ENCODE measurements at regions of chr12 and their contacts with region 1.

Region 1: DNA sequence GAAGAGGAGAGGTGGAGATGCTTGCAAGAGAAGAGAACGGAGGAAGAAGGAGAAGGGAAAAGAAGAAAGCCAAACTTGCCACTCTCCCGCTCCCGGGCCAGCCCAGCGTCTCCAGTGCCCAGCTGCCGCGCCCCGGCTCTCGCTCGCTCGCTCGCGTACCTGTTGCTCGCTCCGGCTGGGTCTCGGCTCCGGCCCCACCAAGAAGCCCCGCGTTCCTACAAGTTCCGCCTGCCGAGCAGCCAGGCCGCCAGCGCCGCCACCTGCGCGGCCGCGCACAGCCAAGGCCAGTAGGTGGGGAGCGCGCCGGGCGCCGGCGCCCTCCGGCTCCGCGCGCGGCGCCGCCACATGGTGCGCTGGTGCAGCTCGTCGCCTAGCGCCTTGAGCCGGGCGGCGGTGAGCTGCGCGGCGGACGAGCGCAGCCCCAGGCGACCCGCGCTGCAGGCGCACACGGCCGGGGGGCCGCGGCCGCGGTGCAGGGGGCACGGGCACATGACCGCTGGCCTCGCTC is 370 bp downstream of the HRK start:
- H3K4me3 ChIP-seq: peak overlapping the region; percentile 49
- H3K27ac ChIP-seq: peak overlapping the region; percentile 84; the same call in 1 of the 2 replicates
- H3K4me1 ChIP-seq: peaks cover 10% of the 10 kb centered on the region
- CTCF ChIP-seq: no peak

Region 2: DNA sequence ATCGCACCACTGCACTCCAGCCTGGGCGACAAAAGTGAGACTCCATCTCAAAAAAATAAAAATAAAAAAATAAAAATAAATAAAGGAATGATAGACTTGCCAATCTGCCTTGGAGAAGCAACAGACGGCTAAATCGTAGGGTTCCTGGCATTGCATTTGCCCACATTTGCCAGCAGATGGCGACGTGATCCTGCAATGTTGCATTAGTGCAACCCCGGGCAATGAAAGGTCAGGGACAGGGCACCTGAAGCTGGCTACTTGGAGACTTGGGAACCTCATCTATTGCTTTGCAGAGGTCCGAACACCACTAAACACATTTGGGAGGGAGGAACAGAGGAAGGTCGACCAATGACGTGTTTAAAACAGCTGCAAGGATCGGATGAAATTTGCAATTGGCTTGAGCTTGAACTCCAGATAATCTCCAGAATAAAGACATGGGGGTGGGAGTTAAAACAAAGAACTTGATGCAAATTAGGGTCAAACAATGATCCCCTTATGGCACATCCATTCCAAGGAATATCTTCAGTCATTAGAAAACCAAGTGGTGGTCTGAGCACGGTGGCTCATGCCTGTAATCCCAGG is 177.6 kb before region 1 on chr12:
- CTCF ChIA-PET with region 1: interaction called, 31 read pairs
- POLR2A ChIA-PET with region 1: no interaction called
- H3K4me3 ChIP-seq: no peak overlapping the region
- H3K27ac ChIP-seq: no peak overlapping the region
- H3K4me1 ChIP-seq: no peaks in the 10 kb centered on the region
- CTCF ChIP-seq: peak; percentile 80

Region 3: GRCh38 chr12:116708826-116709756 is 171.8 kb before region 1 on chr12:
- CTCF ChIA-PET with region 1: interaction called, 31 read pairs
- POLR2A ChIA-PET with region 1: no interaction called
- H3K4me3 ChIP-seq: no peak overlapping the region
- H3K27ac ChIP-seq: no peak overlapping the region
- H3K4me1 ChIP-seq: peaks cover 18% of the 10 kb centered on the region
- CTCF ChIP-seq: peak; percentile 89

Region 4: DNA sequence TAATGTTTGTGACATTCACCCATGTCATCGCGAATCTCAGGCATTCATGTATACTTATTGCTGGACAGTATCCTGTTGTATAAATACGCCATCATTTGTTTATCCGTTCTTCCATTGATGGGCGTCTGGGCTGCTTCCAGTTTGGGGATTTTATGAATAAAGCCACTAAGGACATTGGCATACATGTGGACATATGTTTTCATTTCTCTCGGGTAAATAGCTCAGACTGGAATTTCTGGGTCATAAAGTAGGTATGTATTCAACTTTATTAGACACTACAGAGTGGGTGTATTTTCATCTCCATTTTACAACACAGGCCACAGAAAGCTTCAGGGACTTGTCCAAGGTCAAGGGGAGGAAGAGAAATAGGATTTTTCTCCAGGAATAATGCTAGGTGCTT is 48.5 kb before region 1 on chr12:
- CTCF ChIA-PET with region 1: no interaction called
- POLR2A ChIA-PET with region 1: no interaction called
- H3K4me3 ChIP-seq: no peak overlapping the region
- H3K27ac ChIP-seq: no peak overlapping the region
- H3K4me1 ChIP-seq: no peaks in the 10 kb centered on the region
- CTCF ChIP-seq: no peak

Region 5: GRCh38 chr12:116863275-116863767 is 17.6 kb before region 1 on chr12:
- CTCF ChIA-PET with region 1: interaction called, 52 read pairs
- POLR2A ChIA-PET with region 1: interaction called, 3 read pairs
- H3K4me3 ChIP-seq: no peak overlapping the region
- H3K27ac ChIP-seq: no peak overlapping the region
- H3K4me1 ChIP-seq: peaks cover 8% of the 10 kb centered on the region
- CTCF ChIP-seq: peak; percentile 65

Region 6: DNA sequence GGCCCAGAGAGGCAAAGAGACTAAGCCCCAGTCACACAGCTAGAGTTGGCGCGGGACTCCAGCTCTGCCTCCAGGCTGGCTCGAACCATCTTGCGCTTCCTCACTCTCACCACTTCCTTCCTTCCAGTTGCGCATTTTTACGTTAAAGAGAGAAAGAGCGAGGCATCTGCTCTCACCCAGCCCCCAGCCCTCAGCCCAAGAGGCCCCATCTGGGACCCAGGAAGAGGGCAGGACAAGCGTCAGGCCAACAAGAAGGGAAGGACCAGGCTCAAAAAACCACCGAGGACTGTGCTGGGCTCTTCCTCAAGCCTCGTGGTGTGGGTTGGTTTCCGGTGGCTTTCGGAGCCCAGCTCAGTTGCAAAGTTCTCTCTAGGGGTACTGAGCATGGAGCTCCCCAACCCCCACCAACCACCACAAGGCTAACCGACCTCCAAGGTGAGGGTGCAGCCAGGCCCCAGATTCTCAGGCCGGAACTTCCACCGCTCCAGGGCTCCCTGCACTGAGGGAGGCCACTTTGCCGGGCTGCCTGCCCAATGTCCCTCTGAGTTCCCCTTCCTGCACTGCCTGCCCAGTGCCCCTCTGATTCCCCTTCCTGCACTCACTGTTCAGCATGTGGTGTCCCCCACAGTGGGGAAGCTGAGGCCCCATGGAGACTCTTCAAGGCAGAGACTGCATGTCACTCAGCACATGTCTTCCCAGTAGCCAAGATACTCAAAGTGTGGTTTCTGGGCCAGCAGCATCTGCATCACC is 182.5 kb after region 1 on chr12:
- CTCF ChIA-PET with region 1: no interaction called
- POLR2A ChIA-PET with region 1: no interaction called
- H3K4me3 ChIP-seq: no peak overlapping the region
- H3K27ac ChIP-seq: no peak overlapping the region
- H3K4me1 ChIP-seq: no peaks in the 10 kb centered on the region
- CTCF ChIP-seq: no peak

Measured in HEK293 (cell line).